CD8-positive, alpha-beta T cell (primary cell): ENCODE measurements at regions of chr20 and their contacts with region 1.

Region 1: DNA sequence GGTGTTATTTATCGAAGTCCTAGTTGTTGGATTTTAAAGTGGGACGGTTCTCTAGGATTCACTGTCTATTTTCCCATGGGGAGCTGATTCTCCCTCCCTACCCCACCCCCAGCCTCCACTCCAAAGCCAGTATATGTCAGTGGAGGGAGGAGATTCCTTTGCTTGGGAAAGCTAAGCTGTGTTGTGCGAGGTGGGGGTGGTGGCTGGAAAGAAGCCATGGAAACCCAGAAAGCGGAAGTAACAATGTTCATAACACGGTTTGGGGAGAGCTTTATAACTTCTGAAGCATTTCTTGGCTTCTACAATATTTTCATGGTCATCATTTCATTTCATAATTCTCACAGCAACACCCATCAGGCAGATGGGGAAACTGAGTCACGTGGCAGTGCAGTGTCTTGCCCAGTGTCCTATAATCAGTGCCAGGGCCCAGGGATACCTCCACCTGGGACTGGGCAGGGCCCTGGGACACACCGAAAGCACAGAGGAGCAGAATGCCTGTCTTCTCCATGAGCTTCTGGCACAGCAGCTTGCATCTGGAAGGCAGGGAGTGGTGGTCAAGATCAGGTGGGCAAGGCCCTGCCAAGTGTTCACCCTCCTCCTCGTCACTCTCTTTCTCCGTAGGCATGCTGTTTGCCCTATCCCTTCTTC is 4.5 kb downstream of the SUN5 start:
- DNase-seq: no peak
- ATAC-seq: no peak
- H3K4me3 ChIP-seq: no peak overlapping the region
- H3K4me3 Mint-ChIP-seq: no peak overlapping the region
- H3K27ac ChIP-seq: no peak overlapping the region
- H3K27ac Mint-ChIP-seq: no peak overlapping the region
- H3K4me1 ChIP-seq: peaks cover 4% of the 10 kb centered on the region
- H3K4me1 Mint-ChIP-seq: peaks cover 36% of the 10 kb centered on the region
- H3K27me3 ChIP-seq: no peaks in the 10 kb centered on the region
- H3K27me3 Mint-ChIP-seq: no peaks in the 10 kb centered on the region
- CTCF ChIP-seq: no peak

Region 2: DNA sequence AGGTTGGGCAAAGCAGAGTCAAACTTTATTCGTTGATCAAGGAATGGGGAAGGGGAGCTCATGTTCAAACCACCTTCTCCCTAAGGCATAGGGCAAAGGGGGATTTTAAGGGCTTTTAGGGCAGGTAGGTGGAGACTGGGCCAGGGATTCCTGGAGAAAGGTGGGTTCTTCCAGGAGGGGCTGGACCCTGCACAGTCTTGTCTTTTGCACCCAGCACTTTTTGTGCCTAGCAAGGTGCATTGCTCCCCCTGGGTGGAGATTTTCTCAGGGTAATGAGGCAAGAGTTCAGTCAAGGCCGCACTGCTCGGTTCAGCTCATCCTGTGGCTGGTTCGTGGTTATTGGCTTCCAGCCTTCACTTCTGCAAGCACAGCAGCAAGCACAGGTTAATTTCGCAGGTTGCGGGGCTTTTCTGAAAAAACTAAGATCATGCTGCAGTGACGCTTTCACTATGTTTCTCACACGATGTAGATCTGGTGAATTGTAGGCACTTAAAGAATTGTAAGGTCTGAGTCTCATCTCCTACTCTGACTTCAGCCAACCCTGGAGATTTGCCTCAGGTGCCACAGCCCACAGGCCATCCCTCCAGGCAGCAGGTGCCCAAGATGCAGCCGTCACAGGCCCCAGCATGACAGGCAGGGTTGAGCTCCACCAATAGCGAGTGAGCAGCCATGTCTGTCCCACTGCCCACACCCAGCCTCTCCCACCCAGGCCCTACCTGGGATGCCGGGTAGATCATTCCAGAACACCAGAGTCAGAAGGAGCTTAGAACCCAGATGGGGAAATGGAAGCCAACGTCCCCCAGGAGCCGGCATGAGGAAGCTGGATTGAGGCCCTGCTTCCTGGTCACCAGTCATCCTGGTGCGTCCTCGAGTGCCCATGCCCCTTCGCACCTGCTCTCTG is 32.6 kb before region 1 on chr20:
- CTCF ChIA-PET with region 1: interaction called, 17 read pairs
- POLR2A ChIA-PET with region 1: interaction called, 3 read pairs
- intact Hi-C with region 1: loop called in 1 of 2 experiments (anchors 5 kb)
- DNase-seq: peak in 8 of 9 experiments; percentile 22 to 91 (median 67)
- ATAC-seq: peak; percentile 41
- H3K4me3 ChIP-seq: peak overlapping the region in 1 of 2 experiments; percentile 21
- H3K4me3 Mint-ChIP-seq: peak overlapping the region; percentile 73
- H3K27ac ChIP-seq: peak overlapping the region; percentile 73 to 95
- H3K27ac Mint-ChIP-seq: no peak overlapping the region
- H3K4me1 ChIP-seq: peaks cover 81% of the 10 kb centered on the region
- H3K4me1 Mint-ChIP-seq: peaks cover 79% of the 10 kb centered on the region
- H3K27me3 ChIP-seq: no peaks in the 10 kb centered on the region
- H3K27me3 Mint-ChIP-seq: no peaks in the 10 kb centered on the region
- CTCF ChIP-seq: no peak